Endothelial cell of umbilical vein (primary cell): ENCODE measurements at regions of chr10 and their contacts with region 1.

Region 1: GRCh38 chr10:113916053-113916452 is 61.6 kb downstream of the NHLRC2 start:
- DNase-seq: peak; percentile 38
- H3K4me3 ChIP-seq: no peak overlapping the region
- H3K27ac ChIP-seq: peak overlapping the region; percentile 37
- H3K4me1 ChIP-seq: peaks cover 15% of the 10 kb centered on the region
- H3K27me3 ChIP-seq: no peaks in the 10 kb centered on the region
- CTCF ChIP-seq: no peak
- POLR2A ChIP-seq: no peak

Region 2: DNA sequence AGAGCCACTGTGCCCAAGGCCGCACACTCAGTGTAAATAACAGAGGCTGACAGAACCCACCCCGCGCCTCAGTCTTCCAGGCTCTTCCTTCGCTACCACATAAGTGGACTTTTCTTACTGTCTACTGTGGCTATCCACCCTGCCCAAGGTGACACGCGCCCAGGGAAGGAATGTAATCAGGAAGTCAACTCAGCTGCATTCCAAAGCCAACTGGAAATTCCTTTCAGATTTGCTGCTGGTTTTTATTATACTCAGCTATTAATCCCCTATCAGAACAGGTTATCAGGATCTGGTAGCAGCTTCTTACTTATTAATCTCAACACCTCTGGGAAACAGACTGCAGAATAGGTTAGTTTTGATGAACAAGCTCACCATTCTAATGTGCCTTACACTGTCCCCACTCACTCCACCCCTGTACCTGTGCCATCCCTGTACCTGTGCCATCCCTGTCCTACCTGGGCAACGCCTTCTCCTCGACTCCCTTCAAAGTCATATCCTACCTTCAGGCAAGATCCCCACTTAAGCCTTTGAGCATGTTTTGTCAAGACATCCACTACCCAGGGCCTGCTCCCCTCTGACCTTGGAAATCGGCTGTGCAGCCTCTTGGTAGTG is 29.1 kb after region 1 on chr10:
- CTCF ChIA-PET with region 1: no interaction called
- POLR2A ChIA-PET with region 1: no interaction called
- dilution Hi-C with region 1: no loop called
- intact Hi-C with region 1: loop called (anchors 2 kb)
- DNase-seq: peak; percentile 46
- H3K4me3 ChIP-seq: no peak overlapping the region
- H3K27ac ChIP-seq: peak overlapping the region; percentile 22
- H3K4me1 ChIP-seq: peaks cover 11% of the 10 kb centered on the region
- H3K27me3 ChIP-seq: no peaks in the 10 kb centered on the region
- CTCF ChIP-seq: no peak
- POLR2A ChIP-seq: no peak